Heart left ventricle (tissue), 16 donors: ENCODE measurements at regions of chr3 and their contacts with region 1.

Region 1: GRCh38 chr3:15562560-15562959 is 38.8 kb downstream of the HACL1 start:
- DNase-seq: no peak
- ATAC-seq: no peak
- H3K4me3 ChIP-seq: no peak overlapping the region
- H3K27ac ChIP-seq: no peak overlapping the region
- H3K4me1 ChIP-seq: peaks cover 0 to 3% (median 0%) of the 10 kb centered on the region in 12 donors
- H3K27me3 ChIP-seq: no peaks in the 10 kb centered on the region
- CTCF ChIP-seq: no peak
- POLR2A ChIP-seq: no peak

Region 2: DNA sequence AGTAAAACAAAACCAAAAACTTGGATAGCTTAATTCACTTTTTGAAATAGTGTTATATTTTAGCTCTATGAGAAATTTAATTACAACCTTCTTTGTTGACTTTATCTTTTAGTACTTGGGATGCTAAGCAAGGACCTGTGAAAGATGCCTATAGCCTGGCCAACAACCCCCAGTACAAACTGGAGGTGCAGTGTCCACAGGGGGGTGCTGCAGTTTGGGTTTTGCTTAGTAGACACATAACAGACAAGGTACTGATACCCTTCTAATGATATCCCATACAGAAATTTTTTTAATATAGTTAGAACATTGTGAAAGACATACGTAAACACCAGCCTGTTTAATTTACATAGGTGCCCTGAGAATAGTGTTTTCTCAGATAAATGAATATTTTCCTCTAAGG is 321.2 kb before region 1 on chr3:
- intact Hi-C with region 1: loop called in 1 of 10 experiments (anchors 10 kb)
- DNase-seq: no peak
- ATAC-seq: peak in 1 of 4 donors; percentile 44
- H3K4me3 ChIP-seq: no peak overlapping the region
- H3K27ac ChIP-seq: no peak overlapping the region
- H3K4me1 ChIP-seq: no peaks in the 10 kb centered on the region
- H3K27me3 ChIP-seq: no peaks in the 10 kb centered on the region
- CTCF ChIP-seq: peak in 5 of 12 donors; percentile 9 to 38 (median 26)
- POLR2A ChIP-seq: no peak

Region 3: DNA sequence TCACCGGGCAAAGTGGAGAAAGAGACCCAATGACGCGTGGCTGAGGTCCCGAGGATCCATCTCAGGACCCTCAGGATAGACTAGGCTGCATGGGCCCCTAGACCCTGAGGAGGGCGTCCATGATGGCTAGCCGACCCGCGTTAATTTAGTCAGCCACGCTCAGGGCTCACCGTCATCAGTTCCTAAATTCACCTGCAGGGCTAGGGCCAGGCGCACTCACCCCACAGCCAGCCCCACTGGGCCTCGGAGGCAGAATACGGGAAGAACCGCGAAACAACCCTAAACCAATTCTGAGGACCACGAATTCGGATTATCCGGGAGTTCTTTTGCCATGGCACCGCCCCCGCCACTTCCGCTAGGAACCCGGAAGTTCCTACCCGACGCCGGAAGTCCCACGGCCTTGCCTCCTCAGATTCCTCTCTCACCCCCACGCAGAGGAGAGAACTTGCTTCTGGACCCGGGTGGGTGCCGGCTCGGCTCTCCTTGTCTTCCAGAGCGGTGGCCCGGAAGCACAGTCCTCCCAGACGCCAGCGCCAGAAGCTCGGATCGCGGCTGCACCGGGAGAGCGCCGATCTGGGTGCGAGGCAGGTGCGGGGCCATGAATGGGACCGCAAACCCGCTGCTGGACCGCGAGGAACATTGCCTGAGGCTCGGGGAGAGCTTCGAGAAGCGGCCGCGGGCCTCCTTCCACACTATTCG is 135.2 kb before region 1 on chr3 and contains the starts of genes EAF1 and METTL6:
- intact Hi-C with region 1: loop called (anchors 5 to 10 kb)
- DNase-seq: peak; percentile 84 to 90 (median 88)
- ATAC-seq: peak; percentile 84 to 96 (median 92)
- H3K4me3 ChIP-seq: peak within 1 kb of the TSS; percentile 78 to 98 (median 92)
- H3K27ac ChIP-seq: peak within 1 kb of the TSS in 11 of 12 donors; percentile 62 to 92 (median 81)
- H3K4me1 ChIP-seq: peaks cover 0 to 54% (median 40%) of the 10 kb centered on the region in 12 donors
- H3K27me3 ChIP-seq: no peaks in the 10 kb centered on the region
- CTCF ChIP-seq: peak in 3 of 12 donors; percentile 24 to 30 (median 24)
- POLR2A ChIP-seq: peak in 1 of 2 donors; percentile 61
- total RNA-seq, gene EAF1: 7.0 to 19.6 (median 9.8) TPM
- total RNA-seq, gene METTL6: 5.7 to 14.7 (median 10.5) TPM

Region 4: GRCh38 chr3:15647611-15648167 is 85.1 kb after region 1 on chr3:
- intact Hi-C with region 1: no loop called
- DNase-seq: peak in 1 of 5 donors; percentile 33
- ATAC-seq: peak in 2 of 4 donors; percentile 50 to 54
- H3K4me3 ChIP-seq: no peak overlapping the region
- H3K27ac ChIP-seq: peak overlapping the region; percentile 13 to 85 (median 63)
- H3K4me1 ChIP-seq: peaks cover 0 to 35% (median 21%) of the 10 kb centered on the region in 12 donors
- H3K27me3 ChIP-seq: no peaks in the 10 kb centered on the region
- CTCF ChIP-seq: no peak
- POLR2A ChIP-seq: no peak